Thyroid gland (tissue), 4 donors: ENCODE measurements at regions of chr6 and their contacts with region 1.

Region 1: DNA sequence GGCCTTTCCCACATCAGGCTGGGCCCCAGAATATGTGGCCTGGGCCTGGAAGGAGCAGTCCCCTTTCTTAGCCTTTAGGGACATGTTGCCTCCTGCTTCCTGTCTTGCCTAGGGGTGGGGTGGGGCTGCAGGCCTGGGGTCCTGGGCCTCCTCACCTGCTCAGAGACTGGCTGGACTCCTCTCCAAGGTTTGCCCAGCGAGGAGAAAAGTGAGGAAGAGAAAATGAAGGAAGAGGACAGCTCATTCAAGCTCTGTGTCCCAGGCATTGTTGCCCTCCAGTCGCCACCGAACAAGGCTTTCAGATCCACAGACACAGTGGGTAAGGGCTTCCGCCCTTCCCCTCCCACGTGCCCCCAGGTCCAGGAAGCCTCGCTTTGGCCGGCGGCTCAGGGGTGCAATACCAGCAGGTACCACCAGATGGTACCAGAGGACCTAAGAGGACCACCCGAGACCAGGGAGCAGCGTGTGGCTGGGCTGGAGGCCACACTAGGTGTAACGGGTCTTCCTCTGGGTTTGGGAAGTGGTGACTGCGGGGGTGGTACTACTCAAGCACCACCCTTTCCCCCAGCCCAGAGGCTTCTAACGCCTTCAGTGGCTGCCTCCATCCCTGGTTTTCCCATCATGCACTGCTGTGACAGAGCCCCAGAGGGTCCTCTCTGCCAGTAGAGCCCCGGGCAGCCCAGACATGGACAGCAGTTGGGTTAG is 5.5 kb upstream of the BAK1 start:
- DNase-seq: peak; percentile 81 to 82
- H3K4me3 ChIP-seq: no peak overlapping the region
- H3K27ac ChIP-seq: no peak overlapping the region
- H3K4me1 ChIP-seq: peaks cover 8 to 23% of the 10 kb centered on the region in 2 donors
- H3K27me3 ChIP-seq: no peaks in the 10 kb centered on the region
- CTCF ChIP-seq: peak; percentile 96 to 99 (median 98)
- POLR2A ChIP-seq: no peak

Region 2: DNA sequence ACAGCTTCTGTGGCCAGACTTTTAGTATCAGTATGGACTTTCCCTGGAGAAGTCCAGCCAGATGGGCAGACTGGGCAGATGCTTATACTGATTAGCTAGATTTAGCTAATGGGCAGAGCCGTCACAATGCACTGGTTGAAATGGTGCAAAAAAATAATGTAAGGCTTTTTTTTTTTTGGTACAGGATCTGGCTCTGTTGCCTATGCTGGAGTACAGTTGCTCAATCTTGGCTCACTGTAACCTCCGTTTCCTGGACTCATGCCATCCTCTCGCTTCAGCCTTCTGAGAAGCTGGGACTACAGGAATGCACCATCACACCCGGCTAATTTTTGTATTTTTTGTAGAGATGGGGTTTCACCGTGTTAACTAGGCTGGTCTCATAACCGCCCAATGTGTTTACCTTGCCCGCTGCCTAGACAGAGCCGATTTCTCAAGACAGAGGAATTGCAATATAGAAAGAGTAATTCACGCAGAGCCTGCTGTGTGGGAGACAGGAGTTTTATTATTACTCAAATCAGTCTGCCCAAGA is 210.3 kb before region 1 on chr6:
- intact Hi-C with region 1: no loop called
- DNase-seq: peak; percentile 92 to 94
- H3K4me3 ChIP-seq: no peak overlapping the region
- H3K27ac ChIP-seq: peak overlapping the region; percentile 91 to 96 (median 93)
- H3K4me1 ChIP-seq: peaks cover 26 to 54% of the 10 kb centered on the region in 2 donors
- H3K27me3 ChIP-seq: no peaks in the 10 kb centered on the region
- CTCF ChIP-seq: no peak
- POLR2A ChIP-seq: no peak

Region 3: GRCh38 chr6:33628401-33628964 is 42.9 kb after region 1 on chr6:
- intact Hi-C with region 1: loop called (anchors 5 kb)
- DNase-seq: peak; percentile 14 to 20
- H3K4me3 ChIP-seq: no peak overlapping the region
- H3K27ac ChIP-seq: peak overlapping the region in 2 of 3 donors; percentile 27 to 65
- H3K4me1 ChIP-seq: peaks cover 57 to 86% of the 10 kb centered on the region in 2 donors
- H3K27me3 ChIP-seq: no peaks in the 10 kb centered on the region
- CTCF ChIP-seq: no peak
- POLR2A ChIP-seq: no peak

Region 4: GRCh38 chr6:33642897-33643296 is 57.3 kb after region 1 on chr6:
- intact Hi-C with region 1: no loop called
- DNase-seq: no peak
- H3K4me3 ChIP-seq: no peak overlapping the region
- H3K27ac ChIP-seq: no peak overlapping the region
- H3K4me1 ChIP-seq: no peaks in the 10 kb centered on the region
- H3K27me3 ChIP-seq: no peaks in the 10 kb centered on the region
- CTCF ChIP-seq: no peak
- POLR2A ChIP-seq: no peak

Region 5: DNA sequence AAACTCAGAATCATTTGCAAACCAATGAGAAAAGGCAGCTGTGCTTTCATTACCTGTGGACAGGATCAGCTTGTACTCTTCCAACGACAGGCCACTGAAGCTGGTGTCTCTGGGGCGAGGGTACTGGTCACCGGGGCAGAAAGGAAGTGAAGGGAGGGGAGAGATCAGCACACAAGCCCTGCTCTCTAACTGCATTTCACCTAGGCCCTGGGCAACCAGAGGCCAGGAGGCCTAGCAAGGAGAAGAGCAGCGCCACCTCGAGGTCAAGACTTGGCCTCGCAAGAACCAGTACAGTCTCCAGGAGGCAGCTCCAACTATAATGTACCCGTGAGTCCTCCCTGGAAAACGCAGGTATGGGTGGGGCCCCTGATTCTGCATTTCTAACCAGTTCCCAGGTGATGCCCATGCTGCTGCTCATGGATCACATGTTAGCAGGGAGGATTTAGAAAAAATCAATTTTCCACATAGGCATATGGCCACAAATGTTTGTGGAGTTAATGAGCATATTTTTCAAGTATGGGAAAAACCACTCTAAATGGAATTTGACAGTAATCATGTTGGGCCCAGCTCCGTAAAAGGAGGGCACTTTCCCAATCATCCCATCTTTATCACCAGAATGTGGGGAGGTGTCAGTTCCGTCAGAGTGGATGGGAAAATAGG is 115.0 kb after region 1 on chr6:
- intact Hi-C with region 1: loop called (anchors 2 kb)
- DNase-seq: peak; percentile 71 to 78
- H3K4me3 ChIP-seq: no peak overlapping the region
- H3K27ac ChIP-seq: peak overlapping the region in 1 of 3 donors; percentile 59
- H3K4me1 ChIP-seq: peaks cover 20 to 40% of the 10 kb centered on the region in 2 donors
- H3K27me3 ChIP-seq: no peaks in the 10 kb centered on the region
- CTCF ChIP-seq: peak; percentile 19 to 66 (median 58)
- POLR2A ChIP-seq: no peak